ENCODE measurements at regions of chr20 and their contacts with region 1.

Region 1: DNA sequence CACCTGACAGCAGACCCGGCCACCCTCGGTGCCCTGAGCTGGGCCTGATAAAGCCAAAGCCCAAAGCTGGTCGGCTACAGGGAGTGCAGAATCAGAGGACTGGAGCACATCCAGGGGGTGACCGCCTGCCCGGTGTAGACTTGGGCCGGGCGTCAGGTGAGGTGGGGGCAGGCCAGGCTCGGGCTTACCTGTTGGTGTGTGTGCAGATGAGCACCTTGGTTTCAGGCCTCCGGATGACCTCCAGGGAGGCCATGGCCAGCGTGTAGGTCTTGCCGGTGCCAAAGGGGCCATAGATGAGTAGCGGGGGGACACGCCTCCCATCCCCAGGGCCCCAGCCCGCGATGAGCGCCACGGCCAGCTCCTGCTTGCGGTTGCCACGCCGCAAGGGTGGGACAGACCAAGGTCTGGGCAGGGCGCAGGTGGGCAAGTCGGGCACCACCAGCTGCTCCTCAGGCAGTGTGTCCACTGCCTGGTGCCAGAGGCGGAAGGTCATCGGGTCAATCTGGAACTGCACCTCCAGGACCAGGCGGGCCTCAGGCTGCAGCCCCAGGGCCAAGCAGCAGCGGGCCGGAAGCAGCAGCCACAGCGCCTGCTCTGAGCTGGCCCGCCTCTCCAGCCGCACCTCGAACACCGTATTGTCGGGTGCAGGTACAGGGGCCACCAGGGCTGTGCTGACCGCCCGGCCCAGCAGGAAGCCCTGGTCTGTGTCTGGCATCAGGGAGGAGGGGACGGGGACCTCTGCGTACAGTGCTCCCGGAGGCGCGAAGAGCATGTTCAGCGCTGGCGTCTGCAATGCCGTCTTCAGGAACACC is 5.7 kb downstream of the HELZ2 start:
- DNase-seq: no peak
- ATAC-seq: no peak
- H3K4me3 ChIP-seq: no peak overlapping the region
- H3K27ac ChIP-seq: no peak overlapping the region
- H3K4me1 ChIP-seq: peaks cover 4% of the 10 kb centered on the region; the same call in 1 of the 2 replicates
- H3K27me3 ChIP-seq: no peaks in the 10 kb centered on the region
- CTCF ChIP-seq: no peak

Region 2: GRCh38 chr20:63864847-63865640 is 296.7 kb after region 1 on chr20 and contains the start of gene TPD52L2:
- CTCF ChIA-PET with region 1: interaction called, 12 read pairs
- POLR2A ChIA-PET with region 1: no interaction called
- in situ Hi-C with region 1: no loop called
- intact Hi-C with region 1: no loop called
- DNase-seq: peak; percentile 96
- ATAC-seq: peak; percentile 94
- H3K4me3 ChIP-seq: peak within 1 kb of the TSS; percentile 89 to 98
- H3K27ac ChIP-seq: peak within 1 kb of the TSS; percentile 94
- H3K4me1 ChIP-seq: peaks cover 8% of the 10 kb centered on the region; the same call in 1 of the 2 replicates
- H3K27me3 ChIP-seq: no peaks in the 10 kb centered on the region
- CTCF ChIP-seq: no peak
- total RNA-seq, gene TPD52L2: 113 TPM

Measured in Panc1 (cell line).